ENCODE measurements at regions of chr11 and their contacts with region 1.

Region 1: DNA sequence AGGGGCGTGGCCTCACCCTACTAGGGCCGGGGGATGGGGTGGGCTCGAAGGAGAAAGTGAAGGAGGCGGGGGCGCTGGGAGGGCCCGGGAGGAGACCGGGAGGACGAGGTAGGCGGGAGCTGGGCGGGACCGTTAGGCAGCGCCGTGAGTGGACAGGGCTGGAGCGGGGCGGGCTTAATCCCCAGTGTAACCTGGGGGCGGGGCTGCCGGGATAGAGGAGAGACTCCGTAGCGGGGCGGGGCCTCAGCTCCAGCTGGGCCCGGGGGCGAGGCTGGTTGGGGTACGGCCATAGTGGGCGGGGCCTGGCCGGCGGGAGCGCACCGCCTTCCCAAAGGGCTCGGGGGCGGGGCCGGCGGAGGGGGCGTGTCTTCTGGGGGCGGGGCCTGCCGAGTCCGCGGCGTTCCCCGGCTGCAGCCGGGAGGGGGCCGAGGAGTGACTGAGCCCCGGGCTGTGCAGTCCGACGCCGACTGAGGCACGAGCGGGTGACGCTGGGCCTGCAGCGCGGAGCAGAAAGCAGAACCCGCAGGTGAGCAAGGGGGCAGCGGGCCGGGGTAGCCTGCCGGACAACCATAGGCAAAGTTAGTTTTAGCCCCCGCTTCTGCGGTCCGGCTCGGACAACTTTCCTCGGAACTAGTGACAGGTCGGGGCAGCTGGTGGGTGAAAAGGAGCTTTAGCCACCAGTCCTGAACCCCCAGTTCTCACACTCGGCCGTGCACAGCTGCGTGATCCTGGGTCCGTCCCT is at the start of gene CD82:
- DNase-seq: peak; percentile 98
- H3K4me3 Mint-ChIP-seq: peak within 1 kb of the TSS; percentile 92
- H3K27ac Mint-ChIP-seq: peak within 1 kb of the TSS; percentile 92
- H3K4me1 Mint-ChIP-seq: peaks cover 66% of the 10 kb centered on the region
- H3K27me3 Mint-ChIP-seq: no peaks in the 10 kb centered on the region
- total RNA-seq, gene CD82: 499 and 500 TPM in 2 replicates

Region 2: DNA sequence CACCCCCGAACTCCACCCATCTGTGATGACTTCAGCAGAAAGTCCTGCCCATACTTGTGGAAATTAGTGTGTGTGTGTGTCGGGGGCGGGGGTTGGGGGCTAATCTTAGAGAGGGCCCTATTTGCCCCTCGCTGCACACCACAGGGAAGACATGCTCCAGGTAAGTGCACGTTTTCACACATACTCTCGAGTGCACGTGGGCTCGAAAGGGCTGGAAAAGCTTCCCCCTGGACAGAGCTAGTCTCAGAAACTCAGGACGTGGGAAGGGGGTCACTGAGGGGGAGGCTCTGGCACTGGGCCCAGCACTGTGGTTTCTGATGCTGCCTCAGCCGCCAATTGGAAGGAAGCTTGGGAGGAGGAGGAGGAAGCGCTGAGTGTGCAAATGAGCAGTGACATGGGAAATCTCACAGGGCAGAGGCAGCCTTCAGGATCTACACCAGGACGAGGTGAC is 40.6 kb before region 1 on chr11:
- intact Hi-C with region 1: no loop called
- DNase-seq: no peak
- H3K4me3 Mint-ChIP-seq: no peak overlapping the region
- H3K27ac Mint-ChIP-seq: no peak overlapping the region
- H3K4me1 Mint-ChIP-seq: peaks cover 25% of the 10 kb centered on the region
- H3K27me3 Mint-ChIP-seq: peaks cover 20% of the 10 kb centered on the region

Region 3: GRCh38 chr11:44596525-44597276 is 31.3 kb after region 1 on chr11:
- intact Hi-C with region 1: loop called (anchors 1 kb)
- DNase-seq: peak; percentile 87
- H3K4me3 Mint-ChIP-seq: peak overlapping the region; percentile 71
- H3K27ac Mint-ChIP-seq: peak overlapping the region; percentile 96
- H3K4me1 Mint-ChIP-seq: peaks cover 89% of the 10 kb centered on the region
- H3K27me3 Mint-ChIP-seq: no peaks in the 10 kb centered on the region

Region 4: GRCh38 chr11:44638032-44638431 is 72.7 kb after region 1 on chr11:
- intact Hi-C with region 1: no loop called
- DNase-seq: no peak
- H3K4me3 Mint-ChIP-seq: no peak overlapping the region
- H3K27ac Mint-ChIP-seq: no peak overlapping the region
- H3K4me1 Mint-ChIP-seq: no peaks in the 10 kb centered on the region
- H3K27me3 Mint-ChIP-seq: peaks cover 47% of the 10 kb centered on the region

Region 5: DNA sequence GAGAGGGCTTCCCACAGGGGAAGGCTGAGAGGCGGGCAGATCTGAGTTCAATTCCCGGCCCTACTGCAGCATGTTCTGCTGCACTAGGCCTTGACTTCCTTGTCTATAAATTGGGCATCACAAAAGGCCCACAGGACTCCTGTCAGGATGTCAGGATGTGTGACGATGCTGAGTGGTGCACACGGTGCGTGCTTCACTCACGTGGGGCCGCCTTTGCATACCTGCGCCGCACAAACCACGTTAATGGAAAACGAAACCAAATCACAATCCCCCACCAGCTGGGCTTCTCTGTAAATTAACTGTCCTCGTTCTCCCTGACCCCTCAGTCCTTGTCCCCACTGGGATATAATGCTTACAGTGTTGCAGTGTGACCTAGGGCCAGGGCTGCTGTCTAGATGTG is 129.1 kb after region 1 on chr11:
- intact Hi-C with region 1: no loop called
- DNase-seq: no peak
- H3K4me3 Mint-ChIP-seq: no peak overlapping the region
- H3K27ac Mint-ChIP-seq: no peak overlapping the region
- H3K4me1 Mint-ChIP-seq: peaks cover 6% of the 10 kb centered on the region
- H3K27me3 Mint-ChIP-seq: peaks cover 6% of the 10 kb centered on the region

Region 6: DNA sequence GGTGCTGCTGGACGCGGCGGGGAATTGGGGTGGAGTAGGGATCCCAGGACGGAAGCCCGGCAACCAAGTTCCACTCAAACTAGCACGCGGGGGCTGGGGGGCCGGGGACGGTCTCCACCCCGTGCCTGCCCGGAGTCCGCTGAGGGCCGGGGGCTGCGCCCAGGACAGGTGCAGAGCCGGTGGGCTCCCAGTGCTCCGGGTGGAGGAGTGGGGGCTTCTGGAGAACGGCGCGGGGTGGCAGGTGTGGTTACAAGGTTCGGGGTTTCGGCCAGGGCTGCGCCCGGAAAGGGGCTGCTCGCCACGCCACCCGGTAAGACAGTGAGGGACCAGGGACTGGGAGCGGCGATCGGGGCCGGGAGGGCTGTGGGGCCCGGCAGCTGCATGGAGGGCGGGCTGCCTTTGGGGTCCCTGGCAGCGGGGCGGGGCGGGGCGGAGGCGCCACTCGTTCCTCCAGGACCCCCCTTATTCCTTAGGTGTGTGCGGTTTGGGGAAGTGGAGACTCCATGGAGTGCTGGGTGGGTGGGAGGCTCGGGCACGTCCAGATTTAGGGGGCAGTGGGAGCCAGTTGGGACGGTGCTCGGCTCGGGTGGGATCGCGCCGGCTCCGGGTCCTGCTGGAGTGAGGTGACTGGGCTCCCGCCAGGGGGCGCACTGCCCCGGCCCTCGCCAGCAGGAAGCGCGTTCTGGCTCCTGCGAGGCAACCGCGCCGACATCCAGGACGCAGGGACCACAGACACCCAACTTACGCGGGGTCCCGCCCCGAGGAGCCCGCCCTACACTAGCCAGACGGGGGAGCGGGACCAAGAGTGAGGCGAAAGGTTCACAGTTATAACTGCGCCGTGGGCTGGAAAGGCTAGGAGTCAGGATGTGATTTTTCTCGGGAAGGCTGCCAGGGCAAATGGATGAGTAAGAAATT is 162.2 kb after region 1 on chr11:
- intact Hi-C with region 1: loop called (anchors 5 kb)
- DNase-seq: peak; percentile 72
- H3K4me3 Mint-ChIP-seq: peak overlapping the region; percentile 83
- H3K27ac Mint-ChIP-seq: no peak overlapping the region
- H3K4me1 Mint-ChIP-seq: peaks cover 36% of the 10 kb centered on the region
- H3K27me3 Mint-ChIP-seq: peaks cover 17% of the 10 kb centered on the region

Region 7: GRCh38 chr11:44824300-44824704 is 258.9 kb after region 1 on chr11:
- intact Hi-C with region 1: no loop called
- DNase-seq: no peak
- H3K4me3 Mint-ChIP-seq: no peak overlapping the region
- H3K27ac Mint-ChIP-seq: no peak overlapping the region
- H3K4me1 Mint-ChIP-seq: no peaks in the 10 kb centered on the region
- H3K27me3 Mint-ChIP-seq: peaks cover 5% of the 10 kb centered on the region

Region 8: DNA sequence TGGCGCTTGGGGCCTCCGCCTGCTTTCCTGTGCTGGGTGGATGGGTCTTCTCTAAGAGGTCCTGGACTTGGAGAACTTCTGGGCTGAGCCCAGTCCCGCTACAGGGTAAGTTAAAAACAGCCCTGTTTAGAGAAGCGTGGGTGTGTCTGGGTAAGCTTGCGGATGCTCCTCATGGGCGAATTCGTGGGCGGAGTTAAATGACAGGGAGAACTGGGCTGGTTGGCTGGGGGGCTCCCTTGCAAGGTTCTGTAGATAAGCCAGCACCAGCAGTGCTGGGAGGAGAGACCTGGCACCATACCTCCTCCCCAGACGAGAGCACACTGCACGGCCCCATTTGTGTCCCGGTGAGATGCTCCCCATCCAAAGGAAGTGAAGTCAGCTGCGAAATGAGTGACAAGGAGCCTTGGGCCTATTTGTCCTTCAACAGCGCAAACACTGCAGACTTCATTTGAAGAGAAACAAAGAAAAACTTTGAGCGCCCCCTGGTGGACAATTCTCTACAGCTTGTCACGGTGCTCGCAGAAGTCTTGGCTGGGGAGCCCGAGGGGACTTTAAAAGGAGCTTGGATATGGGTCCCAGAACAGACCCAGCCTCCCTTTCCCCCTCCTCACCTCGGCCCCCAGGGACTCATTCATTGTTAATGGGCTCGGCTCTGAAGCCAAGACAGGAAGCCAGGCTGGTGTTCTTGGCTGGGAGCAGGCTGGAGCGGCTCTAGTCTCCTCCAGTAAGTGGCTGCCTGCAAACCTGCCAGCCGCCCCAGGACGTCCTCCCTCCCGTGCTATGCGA is 345.8 kb after region 1 on chr11:
- intact Hi-C with region 1: loop called (anchors 2 kb)
- DNase-seq: peak; percentile 70
- H3K4me3 Mint-ChIP-seq: no peak overlapping the region
- H3K27ac Mint-ChIP-seq: no peak overlapping the region
- H3K4me1 Mint-ChIP-seq: no peaks in the 10 kb centered on the region
- H3K27me3 Mint-ChIP-seq: peaks cover 4% of the 10 kb centered on the region

Region 9: DNA sequence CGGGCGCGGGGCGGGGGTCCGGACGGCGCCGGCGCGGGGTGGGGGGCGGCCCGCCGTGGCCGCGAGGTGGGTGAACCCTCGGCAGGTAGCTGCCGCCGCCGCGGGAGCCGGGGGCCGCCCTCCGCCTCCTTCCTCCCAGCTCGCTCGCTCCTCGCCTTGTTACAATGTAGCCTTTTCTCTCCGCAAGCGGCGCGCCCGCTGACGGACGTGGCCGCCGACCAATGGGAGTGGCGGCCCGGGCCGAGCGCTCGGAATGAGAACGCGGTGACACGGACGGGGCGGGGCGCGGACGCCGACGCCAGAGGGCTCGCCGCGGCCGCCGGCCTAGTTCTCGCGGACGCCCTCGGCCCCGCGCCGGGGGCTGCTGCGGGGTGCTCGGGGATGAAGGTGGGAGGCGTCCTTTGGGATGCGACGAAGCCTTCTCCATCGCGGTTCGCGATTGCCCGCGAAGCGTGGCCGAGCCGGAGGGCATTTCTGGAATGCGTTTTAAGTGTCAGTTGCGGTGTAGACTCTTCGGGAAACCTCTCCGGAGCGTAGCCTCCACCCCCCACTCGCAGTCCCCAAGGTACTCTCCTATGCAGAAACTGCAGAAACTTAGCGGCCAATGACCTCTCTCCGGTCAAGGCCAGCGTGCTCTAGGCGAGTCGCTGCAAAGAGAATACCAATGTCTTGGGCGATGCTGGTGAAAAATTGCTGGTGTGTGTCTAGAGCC is 581.8 kb after region 1 on chr11:
- intact Hi-C with region 1: loop called (anchors 1 kb)
- DNase-seq: peak; percentile 91
- H3K4me3 Mint-ChIP-seq: peak overlapping the region; percentile 81
- H3K27ac Mint-ChIP-seq: peak overlapping the region; percentile 83
- H3K4me1 Mint-ChIP-seq: peaks cover 13% of the 10 kb centered on the region
- H3K27me3 Mint-ChIP-seq: peaks cover 35% of the 10 kb centered on the region

Measured in activated T-helper 1 cell treated with anti-CD3 and anti-CD28 coated beads, Interleukin-12 subunit alpha, Interleukin-12 subunit beta, Interleukin-2, Interleukin-4 antibody, amounts not matched to agents 30 ng/mL and 10 ng/mL and 1 ng/mL, durations not matched to agents 14 hours and 24 hours and 36 hours (primary cell).